BJ (cell line): ENCODE measurements at regions of chr12 and their contacts with region 1.

Region 1: GRCh38 chr12:92145731-92146496 is at the start of gene BTG1:
- DNase-seq: peak; percentile 99
- H3K4me3 ChIP-seq: peak within 1 kb of the TSS; percentile 98
- H3K27me3 ChIP-seq: no peaks in the 10 kb centered on the region
- CTCF ChIP-seq: no peak
- polyA plus RNA-seq, gene BTG1: 73.8 and 81.3 TPM in 2 replicates

Region 2: GRCh38 chr12:91722072-91722471 is 423.8 kb before region 1 on chr12:
- CTCF ChIA-PET with region 1: no interaction called
- POLR2A ChIA-PET with region 1: no interaction called
- DNase-seq: no peak
- H3K4me3 ChIP-seq: no peak overlapping the region
- H3K27me3 ChIP-seq: no peaks in the 10 kb centered on the region
- CTCF ChIP-seq: no peak

Region 3: DNA sequence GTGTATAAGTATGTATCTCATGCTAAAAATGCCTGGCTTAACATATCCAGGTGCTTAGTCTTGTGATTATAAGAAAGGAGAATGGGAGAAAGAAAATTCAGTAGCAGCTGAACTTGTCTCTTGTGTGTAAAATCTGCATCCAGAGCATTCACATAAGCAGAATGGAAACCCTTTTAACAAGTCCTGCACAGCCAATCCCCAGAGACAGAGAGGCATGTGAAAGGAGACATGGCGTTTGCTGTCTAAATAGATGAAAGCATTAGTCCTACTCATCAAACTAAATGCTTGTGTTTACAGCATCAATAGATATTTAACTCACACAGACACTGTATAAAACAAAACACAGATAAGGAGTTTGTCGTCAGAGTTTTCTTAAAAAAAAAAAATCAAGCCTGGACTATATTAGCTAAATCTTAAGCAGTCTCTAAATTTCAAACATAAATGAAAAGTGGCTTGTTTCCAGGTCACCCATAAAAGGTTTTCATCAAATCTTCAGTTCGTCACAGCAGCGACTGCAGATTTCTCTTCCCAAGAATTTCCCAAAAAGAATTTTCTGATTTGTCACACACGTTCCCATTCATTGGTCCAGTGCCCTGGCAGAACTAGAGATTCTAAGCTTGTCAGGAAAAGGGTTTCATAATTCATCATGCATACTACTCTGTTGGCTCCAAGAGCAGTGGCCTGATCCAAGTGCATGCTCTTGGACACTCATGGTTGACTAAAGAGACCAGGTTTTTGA is 249.5 kb before region 1 on chr12:
- CTCF ChIA-PET with region 1: no interaction called
- POLR2A ChIA-PET with region 1: no interaction called
- DNase-seq: no peak
- H3K4me3 ChIP-seq: no peak overlapping the region
- H3K27me3 ChIP-seq: no peaks in the 10 kb centered on the region
- CTCF ChIP-seq: no peak

Region 4: DNA sequence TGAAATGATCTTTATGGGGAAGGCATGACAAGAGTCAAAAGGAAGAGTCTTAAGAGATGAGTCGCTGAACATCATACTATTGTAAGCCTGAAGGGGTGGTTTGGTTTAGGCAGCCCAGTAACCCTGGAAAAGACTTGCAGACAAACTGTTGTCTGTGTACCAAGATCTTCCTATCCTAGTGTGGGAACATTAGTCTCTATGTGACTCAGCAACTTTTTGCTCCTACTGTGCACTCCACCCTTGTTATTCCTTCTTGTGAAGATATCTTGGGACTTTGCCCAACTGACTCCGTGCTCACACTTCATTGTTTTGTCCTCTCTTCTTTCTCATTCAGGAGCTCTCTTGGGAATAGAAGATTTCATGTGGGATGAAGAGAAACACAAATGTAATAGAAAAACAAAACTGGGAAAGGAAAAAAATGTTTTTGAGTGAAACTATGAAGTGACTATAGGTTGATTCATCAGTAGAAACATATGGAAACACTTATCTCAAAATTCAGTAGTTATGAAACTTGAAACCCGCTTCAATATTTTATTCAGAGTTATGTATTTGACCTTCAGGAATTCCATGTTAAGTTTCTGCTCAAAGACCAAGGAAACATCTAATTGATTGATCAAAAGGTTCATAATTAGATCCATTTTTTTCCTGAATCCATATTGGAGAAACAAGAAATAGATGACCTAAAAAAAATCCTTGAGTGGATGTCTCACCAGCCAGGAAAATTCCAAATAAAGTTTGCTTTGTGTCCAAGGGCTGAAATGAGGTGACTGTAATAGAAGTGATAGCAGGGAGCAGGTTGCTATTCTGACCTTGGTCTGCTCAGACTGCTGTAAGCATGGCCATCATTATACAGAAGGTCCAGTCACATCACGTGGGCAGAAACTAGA is 67.5 kb before region 1 on chr12:
- CTCF ChIA-PET with region 1: interaction called, 3 read pairs
- POLR2A ChIA-PET with region 1: interaction called, 12 read pairs
- DNase-seq: peak; percentile 94
- H3K4me3 ChIP-seq: no peak overlapping the region
- H3K27me3 ChIP-seq: no peaks in the 10 kb centered on the region
- CTCF ChIP-seq: no peak

Region 5: DNA sequence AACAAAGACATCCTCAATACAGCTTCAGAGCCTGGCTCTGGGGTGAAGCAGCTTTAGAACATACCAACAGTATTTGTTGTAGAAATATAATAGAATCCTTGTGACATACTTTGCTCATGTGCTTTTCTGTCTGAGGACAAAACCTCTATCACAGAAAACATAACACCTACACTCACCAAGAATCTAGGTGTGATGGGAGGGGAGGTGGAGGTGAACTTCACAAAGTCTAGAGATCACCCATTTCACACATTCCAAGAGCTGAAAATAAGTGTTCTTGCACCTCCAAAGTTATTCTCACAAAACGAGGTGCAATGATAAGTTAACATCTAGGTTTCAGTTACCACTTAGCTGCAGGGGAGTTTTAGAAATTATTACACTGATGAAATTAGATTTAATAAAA is 32.4 kb after region 1 on chr12:
- CTCF ChIA-PET with region 1: no interaction called
- POLR2A ChIA-PET with region 1: no interaction called
- DNase-seq: no peak
- H3K4me3 ChIP-seq: no peak overlapping the region
- H3K27me3 ChIP-seq: no peaks in the 10 kb centered on the region
- CTCF ChIP-seq: no peak

Region 6: DNA sequence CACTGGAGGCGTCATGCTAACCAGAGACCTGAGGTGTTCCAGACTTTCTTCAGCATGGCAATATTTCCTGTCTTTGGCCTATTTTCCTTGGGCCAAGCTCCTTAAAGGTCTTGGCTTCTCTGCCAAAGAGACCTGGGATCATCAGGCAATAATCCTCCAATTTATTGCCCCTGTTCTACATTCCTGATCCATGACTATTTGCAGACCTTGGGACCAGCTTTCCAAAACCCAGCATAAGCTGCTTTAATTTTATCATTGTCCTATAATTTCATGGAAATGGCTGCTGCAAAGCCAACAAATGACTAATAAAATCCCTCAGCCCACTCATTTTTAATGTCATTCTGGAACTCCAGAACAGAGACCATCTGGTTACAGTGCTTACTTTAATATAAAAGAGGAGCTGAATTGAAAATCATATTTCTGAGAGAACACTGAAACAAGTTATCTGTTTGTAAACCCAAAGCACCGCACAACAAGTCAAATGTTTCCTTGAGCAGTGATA is 166.6 kb after region 1 on chr12:
- CTCF ChIA-PET with region 1: no interaction called
- POLR2A ChIA-PET with region 1: no interaction called
- DNase-seq: no peak
- H3K4me3 ChIP-seq: no peak overlapping the region
- H3K27me3 ChIP-seq: no peaks in the 10 kb centered on the region
- CTCF ChIP-seq: no peak